ENCODE measurements at regions of chr4 and their contacts with region 1.

Region 1: DNA sequence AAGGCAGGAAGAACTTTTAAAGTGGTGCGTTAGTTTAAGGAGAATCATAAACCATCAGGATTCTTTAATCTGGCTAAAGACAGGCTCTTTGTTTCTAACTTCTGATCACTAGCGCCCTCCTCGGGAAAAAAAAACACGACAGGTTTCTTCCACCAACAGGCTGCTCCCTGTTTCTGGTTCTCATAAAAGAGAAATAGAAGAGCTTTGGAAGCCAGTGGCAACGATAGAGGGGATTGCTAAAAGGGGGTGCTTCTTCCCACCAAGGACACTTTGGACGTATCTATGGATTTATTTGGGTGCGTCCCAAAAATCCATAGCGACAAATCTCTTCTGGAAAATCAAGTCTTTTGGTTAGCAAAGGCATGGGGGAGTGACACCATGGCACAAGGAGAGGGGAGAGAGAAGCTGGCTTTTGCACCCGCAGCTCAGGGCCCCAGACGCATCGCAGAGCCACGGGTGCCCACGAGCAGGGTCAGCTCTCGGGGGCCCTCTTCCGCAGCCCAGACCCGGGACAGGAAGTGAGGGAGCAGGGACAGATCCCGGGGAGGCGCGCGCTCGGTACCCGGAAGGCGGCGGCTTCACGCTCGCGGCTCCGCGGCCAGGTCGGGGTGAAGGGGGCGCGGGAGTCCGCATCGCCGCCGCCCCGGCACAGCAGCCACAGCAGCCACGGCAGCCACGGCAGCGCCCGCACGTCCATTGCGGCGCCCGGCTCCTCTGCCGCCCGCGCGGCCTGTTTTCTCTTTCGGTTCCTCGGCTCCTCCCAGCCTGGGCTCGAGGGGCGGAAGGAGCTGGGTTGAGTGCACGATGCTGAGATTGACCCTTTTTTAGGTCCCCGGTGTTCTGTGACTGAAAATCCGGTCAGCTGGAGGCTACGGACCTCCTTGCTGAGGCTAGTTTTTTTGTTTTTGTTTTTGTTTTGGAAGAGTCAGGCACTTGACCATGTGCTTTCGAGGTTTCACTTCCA is at the start of gene CTSO:
- DNase-seq: peak; percentile 83
- ATAC-seq: peak; percentile 92
- H3K4me3 Mint-ChIP-seq: peak within 1 kb of the TSS; percentile 96
- H3K27ac Mint-ChIP-seq: peak within 1 kb of the TSS; percentile 100
- H3K4me1 Mint-ChIP-seq: peaks cover 13% of the 10 kb centered on the region
- H3K27me3 Mint-ChIP-seq: peaks cover 2% of the 10 kb centered on the region
- CTCF ChIP-seq: peak; percentile 79
- total RNA-seq, gene CTSO: 3.4 to 3.7 TPM

Region 2: GRCh38 chr4:155802190-155802959 is 151.1 kb before region 1 on chr4:
- CTCF ChIA-PET with region 1: interaction called, 13 read pairs
- POLR2A ChIA-PET with region 1: interaction called, 3 read pairs
- intact Hi-C with region 1: no loop called
- DNase-seq: no peak
- ATAC-seq: no peak
- H3K4me3 Mint-ChIP-seq: no peak overlapping the region
- H3K27ac Mint-ChIP-seq: no peak overlapping the region
- H3K4me1 Mint-ChIP-seq: peaks cover 8% of the 10 kb centered on the region
- H3K27me3 Mint-ChIP-seq: no peaks in the 10 kb centered on the region
- CTCF ChIP-seq: no peak

Region 3: GRCh38 chr4:155809835-155810234 is 143.6 kb before region 1 on chr4:
- CTCF ChIA-PET with region 1: interaction called, 53 read pairs
- POLR2A ChIA-PET with region 1: interaction called, 3 read pairs
- intact Hi-C with region 1: loop called (anchors 2 kb)
- DNase-seq: peak; percentile 52
- ATAC-seq: peak; percentile 96
- H3K4me3 Mint-ChIP-seq: no peak overlapping the region
- H3K27ac Mint-ChIP-seq: no peak overlapping the region
- H3K4me1 Mint-ChIP-seq: peaks cover 2% of the 10 kb centered on the region
- H3K27me3 Mint-ChIP-seq: no peaks in the 10 kb centered on the region
- CTCF ChIP-seq: peak; percentile 68

Region 4: GRCh38 chr4:156838761-156839160 is 885.3 kb after region 1 on chr4:
- CTCF ChIA-PET with region 1: no interaction called
- POLR2A ChIA-PET with region 1: no interaction called
- intact Hi-C with region 1: no loop called
- DNase-seq: no peak
- ATAC-seq: no peak
- H3K4me3 Mint-ChIP-seq: no peak overlapping the region
- H3K27ac Mint-ChIP-seq: no peak overlapping the region
- H3K4me1 Mint-ChIP-seq: no peaks in the 10 kb centered on the region
- H3K27me3 Mint-ChIP-seq: no peaks in the 10 kb centered on the region
- CTCF ChIP-seq: no peak

Measured in activated CD8-positive, alpha-beta T cell treated with anti-CD3 and anti-CD28 coated beads for 36 hours (primary cell).